ENCODE measurements at regions of chr15 and their contacts with region 1.

Region 1: GRCh38 chr15:99704444-99704838 is 28.8 kb downstream of the LYSMD4 start:
- DNase-seq: peak in 2 of 4 donors; percentile 78 to 87
- ATAC-seq: peak; percentile 83
- H3K4me3 ChIP-seq: no peak overlapping the region
- H3K27ac ChIP-seq: peak overlapping the region in 1 of 2 donors; percentile 85
- H3K4me1 ChIP-seq: peaks cover 33 to 42% of the 10 kb centered on the region in 2 donors
- H3K27me3 ChIP-seq: no peaks in the 10 kb centered on the region
- CTCF ChIP-seq: peak; percentile 62 to 69

Region 2: DNA sequence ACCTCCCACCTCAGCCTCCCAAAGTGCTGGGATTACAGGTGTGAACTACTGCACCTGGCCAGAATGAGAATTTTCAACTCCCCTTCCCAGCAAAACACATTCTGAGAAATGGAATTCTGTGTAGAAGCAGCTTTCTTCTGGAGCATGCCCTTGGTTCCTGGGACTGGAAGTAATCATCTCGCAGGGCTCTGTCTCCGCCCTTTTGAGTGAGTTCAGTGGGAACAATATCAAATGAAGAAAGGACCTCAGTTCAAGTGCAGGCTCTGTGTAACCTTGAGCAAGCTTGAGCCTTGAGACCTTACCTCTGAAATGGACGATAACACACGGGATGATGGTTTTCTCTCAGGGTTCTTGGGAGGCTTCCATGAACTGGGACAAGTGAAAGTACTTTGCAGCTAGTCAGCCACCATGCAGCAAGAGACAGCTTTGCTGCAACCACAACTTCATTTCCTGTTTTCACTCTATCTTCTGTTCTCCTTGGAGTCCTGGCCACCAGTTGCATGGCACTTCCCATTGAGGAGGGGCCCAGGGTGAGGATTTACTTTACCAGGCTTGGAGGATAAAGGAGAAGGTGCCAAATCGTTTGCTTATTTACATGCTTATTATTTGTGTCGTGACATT is 1091.8 kb before region 1 on chr15:
- intact Hi-C with region 1: no loop called
- DNase-seq: no peak
- ATAC-seq: no peak
- H3K4me3 ChIP-seq: no peak overlapping the region
- H3K27ac ChIP-seq: no peak overlapping the region
- H3K4me1 ChIP-seq: peaks cover 0 to 4% of the 10 kb centered on the region in 2 donors
- H3K27me3 ChIP-seq: peaks cover 0 to 4% of the 10 kb centered on the region in 2 donors
- CTCF ChIP-seq: no peak

Region 3: GRCh38 chr15:99385865-99386264 is 318.6 kb before region 1 on chr15:
- intact Hi-C with region 1: loop called in 1 of 2 experiments (anchors 10 kb)
- DNase-seq: peak in 1 of 4 donors; percentile 78
- ATAC-seq: peak; percentile 96
- H3K4me3 ChIP-seq: no peak overlapping the region
- H3K27ac ChIP-seq: peak overlapping the region in 1 of 2 donors; percentile 30
- H3K4me1 ChIP-seq: peaks cover 5 to 7% of the 10 kb centered on the region in 2 donors
- H3K27me3 ChIP-seq: no peaks in the 10 kb centered on the region
- CTCF ChIP-seq: no peak

Measured in left lung (tissue), 14 donors.